Prostate gland (tissue), 2 donors: ENCODE measurements at regions of chr3 and their contacts with region 1.

Region 1: GRCh38 chr3:159260049-159260662 is 458.3 kb downstream of the MFSD1 start:
- DNase-seq: peak; percentile 33
- H3K4me3 ChIP-seq: no peak overlapping the region
- H3K27ac ChIP-seq: no peak overlapping the region
- H3K4me1 ChIP-seq: no peaks in the 10 kb centered on the region
- H3K27me3 ChIP-seq: no peaks in the 10 kb centered on the region
- CTCF ChIP-seq: peak; percentile 45 to 90 (median 82)
- POLR2A ChIP-seq: no peak

Region 2: DNA sequence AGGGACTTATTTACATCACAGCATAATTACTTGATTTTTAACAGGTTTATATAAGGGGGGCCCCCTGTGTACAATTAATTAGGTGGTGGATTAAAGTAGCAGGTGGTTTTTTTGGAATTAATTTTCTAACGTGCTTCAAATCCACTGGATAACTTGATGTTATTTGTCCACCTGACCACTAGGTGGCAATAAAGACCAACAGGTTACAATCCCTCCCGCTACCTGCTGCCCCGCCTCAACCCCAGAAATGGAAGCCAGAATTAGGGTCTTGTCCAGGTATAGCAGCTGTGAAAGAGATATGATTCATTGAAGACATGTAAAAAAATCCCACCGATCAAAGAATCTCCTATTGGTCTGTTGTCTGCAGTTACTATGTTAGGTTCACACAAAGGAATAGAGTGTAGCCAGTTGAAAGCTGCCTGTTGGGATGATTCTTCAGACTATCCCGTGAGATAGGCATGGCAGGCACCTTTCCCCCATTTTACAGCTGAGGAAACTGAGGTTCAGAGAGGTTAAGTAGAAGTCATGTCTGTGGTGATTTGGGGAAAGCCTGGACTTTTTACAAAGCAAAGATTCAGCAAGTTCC is 414.3 kb before region 1 on chr3:
- intact Hi-C with region 1: loop called (anchors 2 kb)
- DNase-seq: no peak
- H3K4me3 ChIP-seq: no peak overlapping the region
- H3K27ac ChIP-seq: no peak overlapping the region
- H3K4me1 ChIP-seq: no peaks in the 10 kb centered on the region
- H3K27me3 ChIP-seq: no peaks in the 10 kb centered on the region
- CTCF ChIP-seq: peak in 3 of 4 experiments; percentile 67 to 71 (median 70)
- POLR2A ChIP-seq: no peak

Region 3: GRCh38 chr3:158918008-158918407 is 342.1 kb before region 1 on chr3:
- intact Hi-C with region 1: loop called (anchors 5 kb)
- DNase-seq: no peak
- H3K4me3 ChIP-seq: no peak overlapping the region
- H3K27ac ChIP-seq: no peak overlapping the region
- H3K4me1 ChIP-seq: no peaks in the 10 kb centered on the region
- H3K27me3 ChIP-seq: no peaks in the 10 kb centered on the region
- CTCF ChIP-seq: peak in 3 of 4 experiments; percentile 14 to 59 (median 25)
- POLR2A ChIP-seq: no peak

Region 4: GRCh38 chr3:159311400-159311799 is 51.2 kb after region 1 on chr3:
- intact Hi-C with region 1: no loop called
- DNase-seq: no peak
- H3K4me3 ChIP-seq: no peak overlapping the region
- H3K27ac ChIP-seq: no peak overlapping the region
- H3K4me1 ChIP-seq: no peaks in the 10 kb centered on the region
- H3K27me3 ChIP-seq: no peaks in the 10 kb centered on the region
- CTCF ChIP-seq: no peak
- POLR2A ChIP-seq: no peak

Region 5: GRCh38 chr3:159619341-159619885 is 359.3 kb after region 1 on chr3:
- intact Hi-C with region 1: no loop called
- DNase-seq: no peak
- H3K4me3 ChIP-seq: no peak overlapping the region
- H3K27ac ChIP-seq: no peak overlapping the region
- H3K4me1 ChIP-seq: no peaks in the 10 kb centered on the region
- H3K27me3 ChIP-seq: peaks cover 8% of the 10 kb centered on the region
- CTCF ChIP-seq: no peak
- POLR2A ChIP-seq: no peak

Region 6: DNA sequence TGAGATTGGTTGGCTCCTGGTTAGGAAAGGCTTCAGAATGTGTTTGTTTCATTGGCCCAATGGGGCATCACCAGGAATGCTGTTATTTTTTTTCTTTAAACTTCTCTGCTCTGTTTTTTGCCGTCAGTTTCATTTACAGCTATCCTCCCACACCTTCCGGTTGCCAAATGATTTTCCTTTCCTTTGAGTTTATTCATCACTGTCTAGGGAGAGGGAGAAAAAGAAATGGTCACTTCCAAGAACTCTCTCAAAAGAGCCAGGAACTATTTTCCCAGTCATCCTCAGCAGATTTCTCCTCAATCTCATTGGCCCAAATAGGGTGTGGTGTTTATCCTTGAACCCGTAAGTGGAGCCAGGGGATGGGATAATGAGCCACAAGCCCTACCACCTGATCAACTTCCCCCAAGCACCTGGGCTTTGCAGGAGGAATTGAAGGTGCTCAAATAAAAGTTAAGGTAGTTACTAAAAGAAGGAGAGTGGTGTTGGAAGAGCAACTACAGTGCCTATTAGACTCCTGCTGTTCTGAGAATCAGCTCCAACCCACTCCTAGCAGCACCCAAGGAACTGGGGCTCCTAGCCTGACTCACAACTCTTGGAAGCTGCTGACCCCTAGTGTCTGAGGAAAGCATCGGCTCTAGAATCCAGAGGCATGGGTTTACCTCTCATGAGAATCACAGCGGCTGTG is 544.7 kb after region 1 on chr3:
- intact Hi-C with region 1: loop called (anchors 5 kb)
- DNase-seq: peak; percentile 64
- H3K4me3 ChIP-seq: no peak overlapping the region
- H3K27ac ChIP-seq: no peak overlapping the region
- H3K4me1 ChIP-seq: no peaks in the 10 kb centered on the region
- H3K27me3 ChIP-seq: no peaks in the 10 kb centered on the region
- CTCF ChIP-seq: peak; percentile 56 to 88 (median 76)
- POLR2A ChIP-seq: no peak